GM12878 (cell line): ENCODE measurements at regions of chr1 and their contacts with region 1.

Region 1: GRCh38 chr1:21117597-21118001 is 59.1 kb downstream of the EIF4G3 start:
- DNase-seq: no peak
- ATAC-seq: peak; percentile 46
- H3K4me3 ChIP-seq: no peak overlapping the region
- H3K27ac ChIP-seq: no peak overlapping the region
- H3K4me1 ChIP-seq: no peaks in the 10 kb centered on the region; the same call in 1 of the 2 replicates
- H3K27me3 ChIP-seq: no peaks in the 10 kb centered on the region
- CTCF ChIP-seq: no peak
- EP300 ChIP-seq: no peak
- POLR2A ChIP-seq: no peak
- RAD21 ChIP-seq: no peak

Region 2: DNA sequence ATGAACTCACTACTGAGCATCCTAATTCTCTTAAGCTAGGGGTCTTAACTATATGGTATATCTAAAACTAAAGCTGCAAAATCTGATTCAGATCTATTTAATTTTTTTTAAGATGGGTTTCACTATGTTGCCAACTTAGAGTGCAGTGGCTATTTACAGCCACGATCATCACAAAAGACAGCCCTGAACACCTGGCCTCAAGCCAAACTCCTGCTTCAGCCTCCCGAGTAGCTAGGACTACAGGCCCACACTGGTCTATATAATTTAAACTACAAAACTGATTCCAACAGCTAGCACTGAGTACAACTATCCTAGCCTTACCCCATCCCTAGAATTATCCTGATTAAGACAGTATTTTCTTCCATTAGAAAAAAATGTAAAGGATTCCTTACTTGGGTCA is 22.0 kb after region 1 on chr1:
- CTCF ChIA-PET with region 1: interaction called, 7 read pairs
- POLR2A ChIA-PET with region 1: interaction called, 10 read pairs
- RAD21 ChIA-PET with region 1: no interaction called
- SMC1A ChIA-PET with region 1: interaction called, 3 read pairs
- in situ Hi-C with region 1: no loop called
- intact Hi-C with region 1: no loop called
- DNase-seq: no peak
- ATAC-seq: no peak
- H3K4me3 ChIP-seq: no peak overlapping the region
- H3K27ac ChIP-seq: no peak overlapping the region
- H3K4me1 ChIP-seq: no peaks in the 10 kb centered on the region
- H3K27me3 ChIP-seq: no peaks in the 10 kb centered on the region
- CTCF ChIP-seq: no peak
- EP300 ChIP-seq: no peak
- POLR2A ChIP-seq: no peak
- RAD21 ChIP-seq: no peak

Region 3: GRCh38 chr1:21189906-21190500 is 72.4 kb after region 1 on chr1:
- CTCF ChIA-PET with region 1: interaction called, 11 read pairs
- POLR2A ChIA-PET with region 1: interaction called, 8 read pairs
- RAD21 ChIA-PET with region 1: interaction called, 4 read pairs
- SMC1A ChIA-PET with region 1: interaction called, 3 read pairs
- in situ Hi-C with region 1: no loop called
- intact Hi-C with region 1: no loop called
- DNase-seq: no peak
- ATAC-seq: no peak
- H3K4me3 ChIP-seq: no peak overlapping the region
- H3K27ac ChIP-seq: no peak overlapping the region
- H3K4me1 ChIP-seq: no peaks in the 10 kb centered on the region
- H3K27me3 ChIP-seq: no peaks in the 10 kb centered on the region
- CTCF ChIP-seq: no peak
- EP300 ChIP-seq: no peak
- POLR2A ChIP-seq: no peak
- RAD21 ChIP-seq: no peak